KBM-7 (cell line): ENCODE measurements at regions of chr4 and their contacts with region 1.

Region 1: GRCh38 chr4:183261953-183262775 is 57.9 kb downstream of the CLDN22 start:
- DNase-seq: peak; percentile 78

Region 2: DNA sequence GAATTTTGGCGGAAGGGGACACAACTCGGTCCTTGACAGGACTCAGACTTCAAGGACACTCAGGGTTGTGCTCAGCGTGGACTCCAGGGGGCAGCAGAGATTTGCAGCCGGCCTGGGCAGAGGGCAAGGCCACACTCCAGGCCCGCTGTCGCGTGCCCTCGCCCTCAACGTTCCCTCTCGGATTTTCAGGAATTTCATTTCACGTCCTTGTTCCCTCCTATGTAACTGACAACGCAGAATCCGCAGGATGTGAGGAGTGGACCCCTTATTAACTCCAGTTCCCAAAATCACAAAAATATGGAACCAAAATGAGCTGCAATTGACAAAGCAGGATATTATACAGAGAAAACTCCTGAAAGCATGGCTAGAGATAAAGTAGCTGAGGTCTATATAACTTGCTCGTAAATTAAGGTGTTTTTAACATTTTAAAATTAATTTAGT is 323.9 kb before region 1 on chr4:
- in situ Hi-C with region 1: loop called (anchors 25 kb)
- DNase-seq: peak; percentile 76

Region 3: DNA sequence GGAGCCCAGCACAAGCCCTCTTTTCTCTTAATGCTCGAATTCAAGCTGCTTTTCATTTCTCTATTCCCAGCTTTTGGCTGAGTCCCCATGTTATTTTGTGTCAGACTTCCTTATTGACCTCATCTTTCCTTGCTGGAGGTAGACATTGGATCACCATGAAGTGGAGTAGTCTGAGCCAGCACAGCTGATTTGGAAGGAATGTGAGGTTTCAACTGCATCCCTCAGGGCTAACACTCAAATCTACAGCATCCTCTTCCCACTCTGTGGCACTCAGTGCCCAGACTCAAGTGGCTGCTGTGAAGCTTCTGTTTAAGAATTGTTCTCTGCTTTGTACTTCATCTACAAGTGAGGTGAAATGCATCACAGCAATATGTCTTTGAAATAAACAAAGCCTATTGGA is 403.3 kb after region 1 on chr4:
- in situ Hi-C with region 1: no loop called
- DNase-seq: no peak